Activated naive CD4-positive, alpha-beta T cell treated with anti-CD3 and anti-CD28 coated beads for 36 hours (primary cell): ENCODE measurements at regions of chr4 and their contacts with region 1.

Region 1: GRCh38 chr4:121736735-121737351 is 28.1 kb downstream of the SMIM43 start:
- DNase-seq: peak; percentile 44
- H3K4me3 Mint-ChIP-seq: no peak overlapping the region
- H3K27ac Mint-ChIP-seq: no peak overlapping the region
- H3K4me1 Mint-ChIP-seq: no peaks in the 10 kb centered on the region
- H3K27me3 Mint-ChIP-seq: no peaks in the 10 kb centered on the region

Region 2: DNA sequence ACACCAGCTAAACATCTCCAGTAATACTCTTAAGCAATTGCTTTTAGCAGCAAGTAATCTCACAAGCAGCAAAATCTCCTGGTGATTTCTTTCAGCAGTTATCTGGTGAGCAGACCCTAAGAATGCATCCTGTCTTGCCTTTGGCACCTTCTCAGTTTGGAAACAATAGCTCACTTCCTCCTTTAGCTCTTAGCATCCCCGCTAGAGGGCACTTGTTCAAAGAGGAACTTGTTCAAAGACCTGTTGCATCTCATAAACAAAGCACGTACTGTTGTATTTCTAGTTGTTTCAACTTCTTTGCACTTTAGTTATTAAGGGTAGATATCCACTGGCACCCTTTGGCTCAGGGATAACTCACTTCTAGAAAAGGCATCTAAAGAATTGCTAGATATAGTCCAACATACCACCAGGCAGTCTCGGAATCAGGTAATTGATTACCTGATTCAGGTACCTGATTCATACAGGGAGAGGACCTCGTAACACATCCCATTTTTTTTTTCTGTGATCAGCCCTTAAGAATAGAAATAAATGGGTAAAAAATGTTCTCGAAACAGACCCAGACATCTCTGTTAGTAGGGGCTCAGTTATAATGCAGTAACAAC is 274.1 kb before region 1 on chr4:
- CTCF ChIA-PET with region 1: interaction called, 5 read pairs
- intact Hi-C with region 1: loop called (anchors 1 kb)
- DNase-seq: peak; percentile 69
- H3K4me3 Mint-ChIP-seq: no peak overlapping the region
- H3K27ac Mint-ChIP-seq: no peak overlapping the region
- H3K4me1 Mint-ChIP-seq: no peaks in the 10 kb centered on the region
- H3K27me3 Mint-ChIP-seq: peaks cover 20% of the 10 kb centered on the region